ENCODE measurements at regions of chr17 and their contacts with region 1.

Region 1: DNA sequence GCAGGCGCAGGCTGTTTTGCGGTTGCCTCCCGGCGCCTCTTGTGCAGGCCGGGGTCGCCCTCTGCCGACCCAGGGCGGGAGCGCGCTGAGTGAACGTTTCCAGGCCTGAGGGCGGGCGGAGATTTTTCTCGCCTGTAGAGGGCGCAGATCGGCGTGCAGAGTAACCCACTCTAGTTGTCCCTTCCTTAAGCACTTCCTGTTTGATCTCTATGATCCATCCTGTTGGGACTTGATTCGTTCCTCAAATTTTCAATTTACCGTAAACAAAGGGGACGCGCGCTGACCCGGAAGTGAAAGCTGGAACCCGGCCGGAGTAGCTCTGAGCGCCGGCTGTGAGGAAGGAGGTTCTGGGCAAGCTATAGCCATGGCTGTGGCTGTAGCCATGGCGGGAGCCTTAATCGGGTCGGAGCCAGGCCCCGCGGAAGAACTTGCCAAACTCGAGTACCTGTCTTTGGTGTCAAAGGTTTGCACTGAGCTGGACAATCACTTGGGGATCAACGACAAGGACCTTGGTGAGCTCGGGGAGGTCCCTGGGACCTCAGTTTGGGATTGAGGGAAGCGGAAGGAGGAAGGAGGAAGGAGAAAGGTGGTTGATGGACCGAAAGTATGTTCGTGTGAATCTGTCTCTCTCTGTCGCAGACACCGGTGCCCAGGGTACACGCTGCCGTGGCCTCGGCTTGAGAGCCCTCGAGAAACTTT is at the start of gene DHX8:
- DNase-seq: peak; percentile 98
- ATAC-seq: peak; percentile 95
- H3K4me3 ChIP-seq: peak within 1 kb of the TSS; percentile 75 to 83
- H3K27ac ChIP-seq: peak within 1 kb of the TSS; percentile 51
- H3K4me1 ChIP-seq: peaks cover 11 to 13% of the 10 kb centered on the region in 2 experiments
- H3K27me3 ChIP-seq: no peaks in the 10 kb centered on the region
- CTCF ChIP-seq: peak; percentile 100
- POLR2A ChIP-seq: peak; percentile 65
- RAD21 ChIP-seq: peak; percentile 100
- total RNA-seq, gene DHX8: 53.5 TPM

Region 2: GRCh38 chr17:43338886-43339516 is 144.8 kb before region 1 on chr17:
- CTCF ChIA-PET with region 1: no interaction called
- POLR2A ChIA-PET with region 1: no interaction called
- RAD21 ChIA-PET with region 1: no interaction called
- intact Hi-C with region 1: loop called (anchors 5 kb)
- DNase-seq: no peak
- ATAC-seq: peak; percentile 67; the same call in 1 of the 2 replicates
- H3K4me3 ChIP-seq: no peak overlapping the region
- H3K27ac ChIP-seq: no peak overlapping the region
- H3K4me1 ChIP-seq: no peaks in the 10 kb centered on the region
- H3K27me3 ChIP-seq: no peaks in the 10 kb centered on the region
- CTCF ChIP-seq: peak; percentile 40 to 74 (median 59); a peak in 5 of 6 replicates
- POLR2A ChIP-seq: no peak
- RAD21 ChIP-seq: peak; percentile 72

Region 3: DNA sequence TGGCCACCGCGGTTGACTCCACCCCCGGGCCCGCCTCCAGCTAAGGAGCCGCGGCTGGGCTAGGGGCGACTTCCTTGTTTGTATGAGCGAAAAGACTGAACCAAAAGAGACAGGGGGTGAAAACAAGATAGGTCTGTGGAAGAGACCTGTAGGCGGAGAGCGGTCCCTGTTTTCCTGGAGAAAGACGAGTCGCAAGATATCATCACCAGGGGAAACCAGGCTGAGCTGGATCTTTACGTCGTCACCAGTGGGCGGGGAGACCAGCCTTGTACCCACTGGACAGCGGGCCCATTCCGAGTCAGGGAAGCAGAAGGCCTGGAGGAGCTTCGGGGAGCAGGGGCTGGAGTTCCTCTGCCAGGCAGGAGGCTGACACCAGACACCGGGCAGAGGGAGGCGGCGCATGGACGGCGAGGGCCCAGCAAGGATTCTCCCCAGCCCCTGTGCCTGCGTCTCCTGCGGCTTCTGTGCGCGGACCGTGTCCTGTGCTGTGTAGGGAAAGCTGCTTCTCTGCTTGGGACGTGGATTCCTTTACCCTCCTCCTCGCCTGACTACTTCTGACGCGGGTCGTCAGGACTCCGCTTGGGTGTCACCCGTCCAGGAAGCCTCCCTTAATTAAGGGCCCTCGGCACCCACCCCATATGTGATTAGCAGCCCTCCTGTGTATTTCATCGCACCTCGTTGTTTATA is 95.3 kb before region 1 on chr17:
- CTCF ChIA-PET with region 1: interaction called, 194 read pairs
- POLR2A ChIA-PET with region 1: interaction called, 26 read pairs
- RAD21 ChIA-PET with region 1: interaction called, 15 to 31 read pairs
- intact Hi-C with region 1: no loop called
- DNase-seq: peak; percentile 86
- ATAC-seq: peak; percentile 86
- H3K4me3 ChIP-seq: peak overlapping the region; percentile 45 to 69
- H3K27ac ChIP-seq: peak overlapping the region; percentile 68
- H3K4me1 ChIP-seq: peaks cover 5 to 25% of the 10 kb centered on the region in 2 experiments; a peak in 3 of 4 replicates
- H3K27me3 ChIP-seq: no peaks in the 10 kb centered on the region
- CTCF ChIP-seq: no peak
- POLR2A ChIP-seq: peak; percentile 62
- RAD21 ChIP-seq: no peak

Region 4: GRCh38 chr17:43400943-43401692 is 82.7 kb before region 1 on chr17:
- CTCF ChIA-PET with region 1: interaction called, 194 read pairs
- POLR2A ChIA-PET with region 1: interaction called, 63 read pairs
- RAD21 ChIA-PET with region 1: interaction called, 3 to 31 read pairs
- intact Hi-C with region 1: no loop called
- DNase-seq: no peak
- ATAC-seq: peak; percentile 49
- H3K4me3 ChIP-seq: no peak overlapping the region
- H3K27ac ChIP-seq: peak overlapping the region; percentile 33; the same call in 1 of the 2 replicates
- H3K4me1 ChIP-seq: peaks cover 3 to 36% of the 10 kb centered on the region in 2 experiments; a peak in 3 of 4 replicates
- H3K27me3 ChIP-seq: no peaks in the 10 kb centered on the region
- CTCF ChIP-seq: no peak
- POLR2A ChIP-seq: no peak
- RAD21 ChIP-seq: no peak

Region 5: DNA sequence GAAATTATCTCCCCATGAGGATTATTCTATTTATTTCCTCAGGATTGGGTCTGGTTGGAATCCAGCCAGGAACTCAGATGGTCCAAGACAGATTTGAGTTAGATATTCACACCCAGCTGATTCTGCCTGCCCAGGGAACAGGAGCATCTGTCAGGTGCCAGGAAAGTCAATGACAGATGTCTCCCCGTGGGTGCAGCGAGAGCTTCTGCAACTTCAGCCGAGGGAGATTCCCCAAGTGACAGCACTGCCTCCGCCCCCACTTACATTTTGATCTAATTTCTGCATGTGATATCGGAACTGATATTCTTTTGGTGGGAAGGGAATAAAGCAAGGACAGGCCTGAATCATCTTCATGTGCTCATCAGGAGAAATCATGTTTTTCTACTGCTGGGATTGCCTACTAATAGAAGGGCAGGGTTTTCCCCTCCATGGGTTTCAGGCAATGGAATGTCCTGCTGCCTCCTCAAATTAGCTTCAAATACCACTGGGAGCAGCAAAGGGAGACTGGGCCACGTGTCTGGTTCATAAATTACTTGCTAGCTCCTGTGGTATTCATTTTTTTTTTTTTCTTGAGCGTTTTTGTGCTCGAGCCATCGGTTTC is 15.7 kb before region 1 on chr17:
- CTCF ChIA-PET with region 1: interaction called, 12 read pairs
- POLR2A ChIA-PET with region 1: interaction called, 6 read pairs
- RAD21 ChIA-PET with region 1: interaction called in 1 of 2 experiments, 3 read pairs
- intact Hi-C with region 1: no loop called
- DNase-seq: no peak
- ATAC-seq: no peak
- H3K4me3 ChIP-seq: no peak overlapping the region
- H3K27ac ChIP-seq: no peak overlapping the region
- H3K4me1 ChIP-seq: peaks cover 0 to 17% of the 10 kb centered on the region in 2 experiments; a peak in 2 of 4 replicates
- H3K27me3 ChIP-seq: no peaks in the 10 kb centered on the region
- CTCF ChIP-seq: no peak
- POLR2A ChIP-seq: no peak
- RAD21 ChIP-seq: no peak

Region 6: DNA sequence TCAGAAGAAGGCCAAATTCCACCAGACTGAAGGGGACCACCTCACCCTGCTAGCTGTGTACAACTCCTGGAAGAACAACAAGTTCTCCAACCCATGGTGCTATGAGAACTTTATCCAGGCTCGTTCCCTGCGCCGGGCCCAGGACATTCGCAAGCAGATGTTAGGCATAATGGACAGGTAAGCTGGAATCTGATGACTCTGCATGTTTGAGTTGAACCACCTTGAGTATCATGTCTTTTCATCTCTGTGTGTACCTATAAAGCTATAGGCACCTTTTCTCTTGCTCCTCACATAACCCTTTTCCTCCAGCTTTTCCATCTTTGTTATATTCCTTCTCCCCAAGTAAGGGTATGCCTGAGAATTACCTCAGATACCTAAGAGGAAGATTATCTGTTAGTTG is 37.6 kb after region 1 on chr17:
- CTCF ChIA-PET with region 1: no interaction called
- POLR2A ChIA-PET with region 1: no interaction called
- RAD21 ChIA-PET with region 1: no interaction called
- intact Hi-C with region 1: no loop called
- DNase-seq: no peak
- ATAC-seq: no peak
- H3K4me3 ChIP-seq: no peak overlapping the region
- H3K27ac ChIP-seq: no peak overlapping the region
- H3K4me1 ChIP-seq: no peaks in the 10 kb centered on the region
- H3K27me3 ChIP-seq: no peaks in the 10 kb centered on the region
- CTCF ChIP-seq: no peak
- POLR2A ChIP-seq: no peak
- RAD21 ChIP-seq: no peak

Region 7: DNA sequence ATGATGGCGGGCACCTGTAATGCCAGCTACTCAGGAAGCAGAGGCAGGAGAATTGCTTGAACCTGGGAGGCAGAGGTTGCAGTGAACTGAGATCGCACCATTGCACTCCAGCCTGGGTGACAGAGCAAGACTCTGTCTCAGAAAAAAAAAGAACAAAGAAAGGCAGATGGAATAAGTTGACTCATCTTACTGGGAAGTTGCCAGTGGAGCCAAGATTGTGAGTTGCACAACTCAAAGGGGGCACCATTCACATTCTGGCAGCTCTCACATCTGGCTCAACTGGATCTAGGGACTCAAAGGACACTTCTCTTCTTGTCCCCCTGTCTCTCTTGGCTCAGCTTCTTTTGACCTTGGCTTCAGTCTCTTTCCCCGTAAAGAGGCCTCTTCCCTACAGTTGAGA is 116.0 kb after region 1 on chr17:
- CTCF ChIA-PET with region 1: no interaction called
- POLR2A ChIA-PET with region 1: no interaction called
- RAD21 ChIA-PET with region 1: no interaction called
- intact Hi-C with region 1: no loop called
- DNase-seq: no peak
- ATAC-seq: no peak
- H3K4me3 ChIP-seq: no peak overlapping the region
- H3K27ac ChIP-seq: no peak overlapping the region
- H3K4me1 ChIP-seq: peaks cover 0 to 13% of the 10 kb centered on the region in 2 experiments; a peak in 1 of 4 replicates
- H3K27me3 ChIP-seq: no peaks in the 10 kb centered on the region
- CTCF ChIP-seq: no peak
- POLR2A ChIP-seq: no peak
- RAD21 ChIP-seq: no peak

Measured in HCT116 (cell line).